ENCODE measurements at regions of chr11 and their contacts with region 1.

Region 1: GRCh38 chr11:111422494-111423249 is 43.6 kb upstream of the POU2AF1 start:
- DNase-seq: peak; percentile 69
- ATAC-seq: peak; percentile 76
- H3K4me3 Mint-ChIP-seq: peak overlapping the region; percentile 42
- H3K27ac Mint-ChIP-seq: peak overlapping the region; percentile 82
- H3K4me1 Mint-ChIP-seq: peaks cover 59% of the 10 kb centered on the region
- H3K27me3 Mint-ChIP-seq: no peaks in the 10 kb centered on the region
- CTCF ChIP-seq: no peak

Region 2: DNA sequence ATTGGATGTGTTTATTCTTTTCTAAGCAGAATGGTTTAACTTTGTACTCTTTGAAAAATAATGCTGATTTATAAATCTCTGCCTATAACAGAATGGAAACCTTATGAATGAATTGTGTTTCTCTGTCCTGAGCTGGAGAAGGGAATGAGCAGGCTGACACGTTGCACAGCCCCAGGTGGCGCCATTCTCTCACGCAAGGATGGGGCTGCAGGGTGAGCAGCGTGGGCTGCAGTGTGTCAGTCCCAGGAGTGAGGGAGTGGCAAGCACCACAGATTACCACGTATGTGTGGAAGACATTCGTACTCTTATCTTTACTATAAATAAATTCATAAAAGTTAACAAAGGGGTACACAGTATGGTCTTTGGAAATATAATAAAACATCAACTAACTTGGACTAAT is 959.5 kb before region 1 on chr11:
- CTCF ChIA-PET with region 1: interaction called, 5 read pairs
- POLR2A ChIA-PET with region 1: no interaction called
- intact Hi-C with region 1: loop called (anchors 5 kb)
- DNase-seq: no peak
- ATAC-seq: peak; percentile 61
- H3K4me3 Mint-ChIP-seq: no peak overlapping the region
- H3K27ac Mint-ChIP-seq: no peak overlapping the region
- H3K4me1 Mint-ChIP-seq: no peaks in the 10 kb centered on the region
- H3K27me3 Mint-ChIP-seq: no peaks in the 10 kb centered on the region
- CTCF ChIP-seq: no peak

Region 3: GRCh38 chr11:111230122-111230465 is 192.6 kb before region 1 on chr11:
- CTCF ChIA-PET with region 1: interaction called, 14 read pairs
- POLR2A ChIA-PET with region 1: no interaction called
- intact Hi-C with region 1: loop called (anchors 2 kb)
- DNase-seq: no peak
- ATAC-seq: peak; percentile 9
- H3K4me3 Mint-ChIP-seq: peak overlapping the region; percentile 72
- H3K27ac Mint-ChIP-seq: no peak overlapping the region
- H3K4me1 Mint-ChIP-seq: peaks cover 40% of the 10 kb centered on the region
- H3K27me3 Mint-ChIP-seq: no peaks in the 10 kb centered on the region
- CTCF ChIP-seq: no peak

Region 4: DNA sequence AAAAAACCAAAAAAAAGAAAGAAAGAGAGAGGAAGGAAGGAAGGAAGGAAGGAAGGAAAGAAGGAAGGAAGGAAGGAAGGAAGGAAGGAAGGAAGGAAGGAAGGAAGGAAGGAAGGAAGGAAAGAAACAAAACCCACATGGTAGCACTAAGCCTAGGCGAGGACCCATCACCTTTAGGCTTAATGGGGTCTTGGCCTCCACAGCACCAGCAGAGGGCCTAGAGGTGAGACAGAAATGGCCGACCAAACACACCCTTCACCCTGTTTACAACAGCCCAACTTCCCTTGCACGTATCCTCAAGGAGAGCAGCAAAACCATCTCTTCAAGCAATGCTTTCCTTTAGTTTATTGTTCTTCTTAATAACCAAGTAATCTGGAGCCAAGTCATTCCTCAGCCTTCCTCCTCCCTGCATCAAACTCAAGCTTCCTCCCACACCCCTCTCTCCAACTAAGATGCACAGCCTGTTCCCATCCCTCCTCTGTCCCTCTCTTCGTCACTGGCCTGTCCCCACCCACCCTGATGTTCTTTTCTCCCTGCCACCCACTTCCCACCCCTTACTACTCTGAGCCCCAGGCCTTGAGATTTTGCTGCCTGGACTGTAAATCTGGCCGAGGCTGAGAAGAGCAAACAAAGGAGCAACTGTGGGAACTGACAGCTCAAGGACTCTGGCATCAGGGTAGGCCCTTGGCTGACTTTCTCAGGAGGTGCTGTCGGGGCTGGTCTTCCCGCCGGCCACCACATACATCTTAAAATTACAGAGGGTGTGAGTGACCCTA is 69.5 kb before region 1 on chr11:
- CTCF ChIA-PET with region 1: interaction called, 144 read pairs
- POLR2A ChIA-PET with region 1: interaction called, 16 read pairs
- intact Hi-C with region 1: no loop called
- DNase-seq: no peak
- ATAC-seq: peak; percentile 53
- H3K4me3 Mint-ChIP-seq: no peak overlapping the region
- H3K27ac Mint-ChIP-seq: peak overlapping the region; percentile 83
- H3K4me1 Mint-ChIP-seq: peaks cover 62% of the 10 kb centered on the region
- H3K27me3 Mint-ChIP-seq: no peaks in the 10 kb centered on the region
- CTCF ChIP-seq: no peak

Region 5: DNA sequence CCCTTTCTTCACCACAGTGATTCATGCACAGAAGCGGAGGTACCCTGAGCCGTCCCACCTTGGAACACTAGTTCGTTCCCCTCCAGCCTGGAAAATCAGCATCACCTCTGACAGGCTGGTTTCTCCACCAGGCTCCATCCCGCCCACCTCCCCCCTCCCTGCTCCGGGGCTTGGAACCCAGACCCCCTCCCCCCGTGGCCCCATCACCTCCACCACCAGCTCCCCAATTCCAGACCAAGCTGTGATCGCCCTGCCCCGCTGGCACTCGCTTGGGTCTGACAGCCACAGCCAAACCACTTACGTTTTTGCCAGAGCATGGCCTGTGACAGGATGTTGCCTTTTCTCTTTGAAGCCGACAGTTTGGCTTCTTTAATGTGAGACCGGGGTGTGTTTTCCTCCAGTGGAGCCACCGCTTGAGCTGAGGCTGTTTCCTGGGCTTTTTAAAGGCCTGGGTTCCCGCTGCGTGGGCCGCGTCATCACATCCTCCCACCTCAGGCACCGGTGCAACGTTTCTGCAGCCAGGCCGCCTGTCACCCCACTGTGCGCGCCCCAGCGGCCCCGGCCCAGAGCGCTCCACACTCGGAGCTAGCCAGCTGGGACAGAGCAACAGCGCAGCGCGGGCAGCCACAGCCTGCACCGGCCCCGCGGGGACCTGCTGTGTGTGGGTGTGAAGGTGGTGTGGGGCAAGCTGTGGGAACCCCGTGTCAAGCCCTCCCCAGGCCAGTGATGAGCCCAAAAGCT is 43.6 kb before region 1 on chr11 and contains the start of gene POU2AF1:
- CTCF ChIA-PET with region 1: interaction called, 91 read pairs
- POLR2A ChIA-PET with region 1: interaction called, 581 read pairs
- intact Hi-C with region 1: loop called (anchors 1 kb)
- DNase-seq: peak; percentile 76
- ATAC-seq: peak; percentile 69
- H3K4me3 Mint-ChIP-seq: peak within 1 kb of the TSS; percentile 96
- H3K27ac Mint-ChIP-seq: peak within 1 kb of the TSS; percentile 98
- H3K4me1 Mint-ChIP-seq: peaks cover 88% of the 10 kb centered on the region
- H3K27me3 Mint-ChIP-seq: no peaks in the 10 kb centered on the region
- CTCF ChIP-seq: no peak
- total RNA-seq, gene POU2AF1: 141 and 155 TPM in 2 replicates

Region 6: GRCh38 chr11:111408789-111409727 is 13.6 kb before region 1 on chr11:
- CTCF ChIA-PET with region 1: interaction called, 6 read pairs
- POLR2A ChIA-PET with region 1: interaction called, 250 read pairs
- intact Hi-C with region 1: loop called (anchors 1 kb)
- DNase-seq: no peak
- ATAC-seq: no peak
- H3K4me3 Mint-ChIP-seq: peak overlapping the region; percentile 51
- H3K27ac Mint-ChIP-seq: peak overlapping the region; percentile 90
- H3K4me1 Mint-ChIP-seq: peaks cover 80% of the 10 kb centered on the region
- H3K27me3 Mint-ChIP-seq: no peaks in the 10 kb centered on the region
- CTCF ChIP-seq: no peak